Panc1 (cell line): ENCODE measurements at regions of chr1 and their contacts with region 1.

Region 1: GRCh38 chr1:28447679-28448078 is 58.2 kb upstream of the RCC1 start:
- DNase-seq: no peak
- ATAC-seq: no peak
- H3K4me3 ChIP-seq: no peak overlapping the region
- H3K27ac ChIP-seq: no peak overlapping the region
- H3K4me1 ChIP-seq: no peaks in the 10 kb centered on the region
- H3K27me3 ChIP-seq: no peaks in the 10 kb centered on the region
- CTCF ChIP-seq: no peak

Region 2: GRCh38 chr1:28280501-28280900 is 167.2 kb before region 1 on chr1:
- CTCF ChIA-PET with region 1: no interaction called
- POLR2A ChIA-PET with region 1: no interaction called
- in situ Hi-C with region 1: no loop called
- intact Hi-C with region 1: no loop called
- DNase-seq: no peak
- ATAC-seq: no peak
- H3K4me3 ChIP-seq: no peak overlapping the region
- H3K27ac ChIP-seq: no peak overlapping the region
- H3K4me1 ChIP-seq: no peaks in the 10 kb centered on the region
- H3K27me3 ChIP-seq: no peaks in the 10 kb centered on the region
- CTCF ChIP-seq: no peak

Region 3: DNA sequence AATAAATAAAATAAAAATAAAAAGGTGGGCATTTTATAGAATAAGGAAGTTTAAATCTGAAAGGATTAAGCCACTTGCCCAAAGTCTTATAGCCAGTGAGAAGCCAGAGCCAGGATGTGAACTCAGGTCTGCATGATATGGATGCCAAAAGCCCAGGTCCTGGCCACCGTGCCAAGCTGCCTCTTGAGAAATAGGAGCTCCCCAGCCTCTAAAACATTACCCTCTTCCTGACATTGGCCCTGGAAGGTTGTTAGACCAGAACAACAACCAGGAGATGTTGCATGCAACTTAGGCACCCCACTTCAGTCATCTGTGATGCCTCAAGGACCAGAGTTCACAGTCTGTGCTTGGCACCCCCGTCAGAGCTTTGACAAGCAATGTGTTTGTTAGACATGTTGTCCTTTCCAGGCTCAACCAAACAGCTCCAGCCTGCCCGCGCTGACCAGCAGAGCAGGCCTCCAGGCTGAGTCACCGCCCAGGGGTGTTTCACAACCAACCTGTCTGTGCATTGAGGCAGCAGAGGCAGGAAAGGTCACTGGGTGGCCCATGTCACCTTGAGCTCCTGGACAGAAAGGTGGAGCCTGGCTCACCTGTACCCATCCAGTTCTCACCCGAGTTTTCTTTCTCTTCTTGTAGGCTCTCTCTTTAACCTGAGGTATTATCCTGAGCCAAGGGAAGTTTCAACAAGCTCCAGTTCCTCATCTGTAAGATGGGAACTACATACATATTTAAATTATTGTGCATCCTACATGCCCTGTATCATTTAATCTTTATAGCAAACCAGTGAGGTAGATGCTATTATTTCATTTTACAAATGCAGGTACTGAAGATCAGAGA is 133.8 kb before region 1 on chr1:
- CTCF ChIA-PET with region 1: no interaction called
- POLR2A ChIA-PET with region 1: interaction called, 10 read pairs
- in situ Hi-C with region 1: no loop called
- intact Hi-C with region 1: no loop called
- DNase-seq: peak; percentile 51
- ATAC-seq: peak; percentile 91
- H3K4me3 ChIP-seq: no peak overlapping the region
- H3K27ac ChIP-seq: no peak overlapping the region
- H3K4me1 ChIP-seq: peaks cover 7% of the 10 kb centered on the region; the same call in 1 of the 2 replicates
- H3K27me3 ChIP-seq: no peaks in the 10 kb centered on the region
- CTCF ChIP-seq: no peak